ENCODE measurements at regions of chr5 and their contacts with region 1.

Region 1: DNA sequence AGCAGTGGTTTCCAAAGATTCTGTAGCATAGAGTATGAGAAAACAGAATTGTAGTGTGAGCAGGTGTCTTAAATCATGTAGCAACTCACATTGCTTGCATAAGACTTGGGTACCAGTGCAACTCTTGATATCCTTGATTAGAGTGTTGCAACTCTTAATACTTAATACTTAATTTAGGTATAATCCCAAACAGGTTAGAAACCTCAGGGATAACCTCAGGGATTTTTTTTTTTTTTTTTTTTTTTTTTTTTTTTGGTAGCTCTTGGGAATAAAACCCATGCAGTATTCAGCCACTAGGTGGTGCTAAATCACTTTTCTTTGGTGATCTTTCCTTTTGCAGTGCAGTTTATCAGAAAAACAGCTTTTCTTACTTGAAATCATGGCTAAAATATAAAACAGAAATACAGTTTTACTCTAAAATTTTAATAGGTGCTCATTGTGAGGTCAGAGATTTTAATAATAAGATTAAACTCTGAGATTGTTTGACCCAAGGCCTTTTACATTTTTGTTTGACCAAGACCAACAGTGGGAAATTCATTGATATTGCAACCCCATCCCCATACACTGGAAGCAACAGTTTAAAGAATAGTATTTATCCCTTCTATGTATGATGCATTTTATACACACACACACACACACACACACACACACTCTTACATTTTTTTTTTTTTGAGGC is 55.3 kb downstream of the ERAP1 start:
- DNase-seq: peak; percentile 64
- H3K4me3 ChIP-seq: no peak overlapping the region
- H3K27ac ChIP-seq: no peak overlapping the region
- H3K4me1 ChIP-seq: no peaks in the 10 kb centered on the region
- H3K27me3 ChIP-seq: no peaks in the 10 kb centered on the region
- CTCF ChIP-seq: peak; percentile 76

Region 2: DNA sequence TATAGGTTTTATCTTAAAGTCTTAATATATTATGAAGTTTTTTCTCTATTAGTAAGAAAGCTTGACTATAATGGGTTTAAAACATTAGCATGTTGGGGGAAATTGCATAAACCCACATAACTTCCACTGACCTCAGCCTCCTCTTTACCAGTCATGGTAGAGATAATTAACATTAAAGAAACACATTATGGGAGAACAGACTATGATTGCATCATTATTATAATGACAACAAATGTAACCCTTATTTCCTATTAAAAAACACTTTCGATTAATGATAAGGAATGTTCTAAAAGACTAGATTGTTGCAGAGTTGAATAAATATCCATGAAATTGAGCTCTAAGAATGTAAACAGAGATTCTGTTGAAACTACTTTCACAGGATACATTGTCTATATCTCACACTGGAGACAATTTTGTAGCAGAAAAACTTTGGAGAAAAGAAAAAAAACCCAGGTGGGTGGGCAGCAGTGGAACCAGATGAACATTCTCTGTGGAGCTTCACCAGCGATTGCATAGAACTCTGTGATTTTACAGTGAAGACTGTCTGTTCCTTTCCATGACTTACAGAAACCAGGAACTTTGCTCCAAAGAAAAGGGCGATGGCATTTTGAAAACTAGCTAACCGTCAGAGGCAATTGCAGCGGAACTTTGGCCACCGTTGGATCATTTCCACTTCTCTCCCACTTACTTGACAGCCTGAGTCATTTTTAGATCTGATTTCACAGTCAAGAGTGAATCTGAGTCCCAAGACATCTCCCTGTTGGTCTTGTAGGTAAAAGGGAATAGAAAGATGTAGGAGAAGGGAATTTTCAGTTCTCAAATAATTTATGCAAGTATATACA is 102.8 kb after region 1 on chr5:
- intact Hi-C with region 1: no loop called
- DNase-seq: peak; percentile 77
- H3K4me3 ChIP-seq: no peak overlapping the region
- H3K27ac ChIP-seq: peak overlapping the region; percentile 76
- H3K4me1 ChIP-seq: no peaks in the 10 kb centered on the region
- H3K27me3 ChIP-seq: no peaks in the 10 kb centered on the region
- CTCF ChIP-seq: no peak

Region 3: GRCh38 chr5:96885518-96886338 is 133.2 kb after region 1 on chr5:
- intact Hi-C with region 1: loop called (anchors 10 kb)
- DNase-seq: no peak
- H3K4me3 ChIP-seq: no peak overlapping the region
- H3K27ac ChIP-seq: no peak overlapping the region
- H3K4me1 ChIP-seq: no peaks in the 10 kb centered on the region
- H3K27me3 ChIP-seq: no peaks in the 10 kb centered on the region
- CTCF ChIP-seq: no peak

Region 4: DNA sequence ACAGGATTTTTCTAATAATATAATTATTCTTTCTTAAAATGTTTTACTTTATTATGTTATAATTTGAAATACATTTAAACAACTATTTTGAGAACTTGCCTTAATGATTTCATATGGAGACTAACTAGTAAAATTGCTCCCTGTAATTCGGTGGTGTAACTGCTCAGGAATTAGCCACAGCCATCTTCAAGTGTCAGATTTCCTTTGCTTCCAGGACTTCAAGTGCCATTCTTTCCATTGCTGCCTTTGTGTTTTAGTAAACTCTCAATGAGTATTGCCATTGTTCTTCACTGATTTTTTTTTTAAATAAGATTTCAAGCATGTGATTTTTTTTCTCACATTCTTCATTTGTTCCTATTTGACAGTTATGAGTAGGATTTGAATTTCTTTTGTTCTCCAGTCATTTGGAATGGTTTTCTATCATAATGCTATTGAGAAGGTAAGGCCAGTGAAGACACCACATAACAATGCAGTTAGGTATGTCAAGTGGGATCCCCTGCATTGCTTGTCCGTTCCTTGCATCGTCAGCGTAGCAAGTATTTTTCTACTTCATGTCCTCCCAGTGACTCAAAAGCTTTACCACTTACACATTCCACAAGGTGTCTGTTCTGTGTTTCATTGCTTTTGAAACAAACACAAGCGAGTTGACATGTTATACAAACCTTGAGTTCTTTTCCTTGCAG is 267.1 kb after region 1 on chr5:
- intact Hi-C with region 1: loop called (anchors 10 kb)
- DNase-seq: no peak
- H3K4me3 ChIP-seq: no peak overlapping the region
- H3K27ac ChIP-seq: no peak overlapping the region
- H3K4me1 ChIP-seq: no peaks in the 10 kb centered on the region
- H3K27me3 ChIP-seq: no peaks in the 10 kb centered on the region
- CTCF ChIP-seq: no peak

Region 5: DNA sequence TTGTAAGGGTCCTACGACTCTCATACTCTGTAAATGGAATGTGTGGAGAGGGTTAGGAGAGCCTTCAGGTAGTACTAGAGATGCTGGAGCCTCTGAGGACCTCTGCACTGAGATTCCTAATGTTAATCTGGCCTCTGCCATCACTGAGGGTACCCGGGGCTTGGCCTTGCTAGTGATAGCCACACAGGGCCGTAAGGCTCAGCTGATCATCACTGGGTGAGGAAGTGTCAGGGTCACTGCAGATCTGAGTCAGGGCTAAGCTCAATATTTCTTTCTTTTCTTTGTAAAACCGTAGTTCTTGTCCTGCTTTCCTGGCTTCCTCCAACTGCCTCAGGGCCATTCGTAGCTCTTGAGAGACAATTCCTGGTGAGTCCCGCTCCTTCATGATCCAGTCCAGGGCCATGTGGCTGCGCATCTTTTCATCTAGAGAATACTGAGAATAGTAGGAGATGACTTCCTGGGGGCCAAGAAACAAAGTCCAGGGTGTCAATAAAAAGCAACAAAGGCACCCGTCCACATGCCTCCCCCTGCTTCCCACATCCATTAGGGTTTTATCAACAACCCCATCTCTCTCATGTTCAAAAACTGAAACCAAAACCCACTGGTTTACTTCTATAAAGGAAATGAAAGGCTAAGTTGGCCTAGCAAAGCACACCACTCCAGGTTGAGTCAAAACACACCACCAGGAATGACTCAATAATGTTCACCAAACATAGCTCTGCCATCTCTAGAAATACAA is 342.3 kb after region 1 on chr5:
- intact Hi-C with region 1: no loop called
- DNase-seq: no peak
- H3K4me3 ChIP-seq: no peak overlapping the region
- H3K27ac ChIP-seq: no peak overlapping the region
- H3K4me1 ChIP-seq: no peaks in the 10 kb centered on the region
- H3K27me3 ChIP-seq: no peaks in the 10 kb centered on the region
- CTCF ChIP-seq: no peak

Region 6: GRCh38 chr5:97162045-97162444 is 409.6 kb after region 1 on chr5:
- intact Hi-C with region 1: loop called (anchors 5 kb)
- DNase-seq: peak; percentile 80
- H3K4me3 ChIP-seq: no peak overlapping the region
- H3K27ac ChIP-seq: no peak overlapping the region
- H3K4me1 ChIP-seq: no peaks in the 10 kb centered on the region
- H3K27me3 ChIP-seq: no peaks in the 10 kb centered on the region
- CTCF ChIP-seq: peak; percentile 91